ENCODE measurements at regions of chr1 and their contacts with region 1.

Region 1: DNA sequence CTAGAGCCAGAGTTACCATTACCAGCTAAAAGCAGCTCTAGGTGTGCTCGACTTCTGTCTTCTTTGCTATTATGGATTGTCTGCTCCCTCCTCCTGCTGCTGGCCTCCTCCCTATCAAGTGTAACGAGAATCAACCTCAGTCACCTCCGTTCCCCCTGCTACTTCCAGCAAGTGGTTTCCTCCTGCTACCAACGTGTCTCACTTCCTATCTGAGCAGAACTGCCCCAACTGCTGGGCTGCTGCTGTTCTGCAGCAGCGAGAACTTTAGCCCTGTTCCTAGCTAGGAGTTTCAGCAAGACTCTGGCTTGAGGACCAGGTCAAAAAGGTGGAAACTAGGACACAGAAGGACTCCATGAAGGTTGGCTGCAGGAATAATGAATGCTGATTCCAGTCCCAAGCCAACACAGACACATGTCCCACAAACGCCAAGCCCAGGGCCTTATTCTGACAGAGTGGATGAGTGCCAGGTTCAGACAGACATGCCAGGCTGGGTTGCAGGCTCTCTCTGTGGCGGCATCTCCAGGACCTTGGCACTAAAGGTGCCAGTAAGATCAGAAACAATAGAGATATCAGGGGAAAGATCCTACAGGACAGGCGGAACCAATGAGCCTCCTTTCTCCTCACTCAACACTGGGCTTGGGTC is 46.9 kb downstream of the CD34 start:
- DNase-seq: peak; percentile 69
- H3K4me3 Mint-ChIP-seq: peak overlapping the region; percentile 33
- H3K27ac Mint-ChIP-seq: peak overlapping the region; percentile 80
- H3K4me1 Mint-ChIP-seq: peaks cover 66% of the 10 kb centered on the region
- H3K27me3 Mint-ChIP-seq: no peaks in the 10 kb centered on the region

Region 2: GRCh38 chr1:207355060-207355459 is 509.0 kb before region 1 on chr1:
- CTCF ChIA-PET with region 1: no interaction called
- POLR2A ChIA-PET with region 1: no interaction called
- DNase-seq: no peak
- H3K4me3 Mint-ChIP-seq: no peak overlapping the region
- H3K27ac Mint-ChIP-seq: no peak overlapping the region
- H3K4me1 Mint-ChIP-seq: peaks cover 38% of the 10 kb centered on the region
- H3K27me3 Mint-ChIP-seq: no peaks in the 10 kb centered on the region

Region 3: GRCh38 chr1:207876131-207876530 is 12.1 kb after region 1 on chr1:
- CTCF ChIA-PET with region 1: interaction called, 124 read pairs
- POLR2A ChIA-PET with region 1: no interaction called
- DNase-seq: no peak
- H3K4me3 Mint-ChIP-seq: no peak overlapping the region
- H3K27ac Mint-ChIP-seq: no peak overlapping the region
- H3K4me1 Mint-ChIP-seq: peaks cover 61% of the 10 kb centered on the region
- H3K27me3 Mint-ChIP-seq: no peaks in the 10 kb centered on the region

Measured in activated CD4-positive, alpha-beta T cell treated with anti-CD3 and anti-CD28 coated beads, Interleukin-2, amount 10 ng/mL, durations not matched to agents 7 days and 5 days (primary cell).